ENCODE measurements at regions of chr10 and their contacts with region 1.

Region 1: DNA sequence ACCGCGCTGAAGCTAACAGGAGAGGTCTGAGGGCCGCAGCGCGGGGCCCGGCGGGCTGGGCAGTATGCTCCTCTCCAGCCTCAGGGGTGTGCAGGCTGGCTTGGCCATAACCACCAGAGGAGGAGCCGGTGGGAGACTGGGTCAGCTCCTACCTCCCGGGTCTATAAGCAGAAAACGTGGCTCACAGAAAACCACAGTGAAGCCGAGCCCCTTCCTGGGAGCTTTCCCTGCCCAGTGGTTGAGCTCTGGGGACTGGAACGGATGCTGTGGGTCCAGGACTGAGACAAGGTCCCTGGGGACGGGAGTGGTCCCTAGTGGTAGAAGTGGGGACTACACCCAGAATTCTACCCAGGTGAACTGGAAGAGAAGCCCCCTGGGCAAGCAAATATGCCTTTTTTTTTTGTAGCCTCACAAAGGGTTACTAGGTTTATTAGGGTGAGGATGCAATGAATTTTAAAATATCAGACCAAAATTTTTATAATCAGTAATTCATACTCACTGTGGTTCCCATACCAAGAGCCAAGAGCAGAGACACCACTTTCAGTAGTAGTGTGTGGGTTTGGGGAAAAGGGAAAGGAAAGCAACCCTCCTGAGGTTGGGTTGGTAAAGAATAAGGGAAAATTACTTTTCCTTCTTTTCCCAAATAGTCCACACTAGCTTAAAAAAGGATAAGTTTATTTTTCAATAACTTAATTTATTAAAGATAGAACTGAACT is 67.9 kb upstream of the PRKCQ start:
- DNase-seq: peak; percentile 87
- ATAC-seq: peak; percentile 95
- H3K4me3 Mint-ChIP-seq: no peak overlapping the region
- H3K27ac Mint-ChIP-seq: no peak overlapping the region
- H3K4me1 Mint-ChIP-seq: peaks cover 30% of the 10 kb centered on the region
- H3K27me3 Mint-ChIP-seq: no peaks in the 10 kb centered on the region
- CTCF ChIP-seq: peak; percentile 83

Region 2: DNA sequence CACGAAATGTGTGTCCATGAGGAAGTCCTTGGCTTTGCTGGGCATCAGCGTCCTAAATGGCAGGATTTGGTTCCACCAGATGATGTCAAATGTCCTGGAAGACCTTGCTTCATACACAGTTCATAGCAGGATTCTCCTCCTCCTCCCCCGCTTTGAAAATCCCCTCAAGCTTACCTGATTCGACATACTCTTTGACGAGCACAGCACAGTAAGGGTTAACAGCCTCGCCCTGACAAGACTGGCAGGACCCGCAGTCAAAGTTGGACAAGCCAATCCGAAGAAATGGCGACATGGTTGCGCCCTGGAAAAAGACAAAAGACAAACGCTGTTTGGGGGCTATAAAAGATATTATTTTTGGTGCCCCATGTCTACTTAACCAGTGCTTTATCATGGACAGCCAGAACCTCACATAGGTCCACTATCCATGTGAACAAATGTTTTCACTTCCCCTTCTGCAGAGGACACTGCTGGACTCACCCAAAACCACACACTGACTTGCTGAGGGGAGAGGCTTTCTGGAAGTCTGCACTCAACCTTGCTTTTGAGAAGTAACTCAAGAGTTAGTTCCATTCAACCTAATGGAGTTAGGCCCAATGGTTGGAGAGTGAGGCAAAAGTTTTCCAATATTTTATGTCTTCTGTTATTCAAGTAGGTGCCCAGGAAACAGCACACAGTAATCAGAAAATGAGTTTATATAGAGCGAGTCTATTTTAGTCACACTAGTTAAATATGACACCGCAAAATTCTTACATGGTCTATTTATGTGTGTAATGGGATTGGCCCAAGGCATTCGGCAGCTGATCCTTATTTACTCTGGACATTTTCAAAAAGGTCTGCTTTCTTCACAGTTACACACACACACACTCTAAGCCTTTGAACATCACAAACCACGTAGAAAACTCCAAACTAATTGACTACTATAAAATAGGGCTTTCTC is 132.9 kb before region 1 on chr10:
- CTCF ChIA-PET with region 1: interaction called, 17 read pairs
- POLR2A ChIA-PET with region 1: no interaction called
- DNase-seq: no peak
- ATAC-seq: no peak
- H3K4me3 Mint-ChIP-seq: no peak overlapping the region
- H3K27ac Mint-ChIP-seq: no peak overlapping the region
- H3K4me1 Mint-ChIP-seq: peaks cover 15% of the 10 kb centered on the region
- H3K27me3 Mint-ChIP-seq: no peaks in the 10 kb centered on the region
- CTCF ChIP-seq: no peak

Region 3: GRCh38 chr10:6580279-6581029 is 67.5 kb before region 1 on chr10:
- CTCF ChIA-PET with region 1: interaction called, 37 read pairs
- POLR2A ChIA-PET with region 1: no interaction called
- DNase-seq: peak; percentile 81
- ATAC-seq: peak; percentile 74
- H3K4me3 Mint-ChIP-seq: peak overlapping the region; percentile 85
- H3K27ac Mint-ChIP-seq: peak overlapping the region; percentile 58
- H3K4me1 Mint-ChIP-seq: peaks cover 35% of the 10 kb centered on the region
- H3K27me3 Mint-ChIP-seq: peaks cover 5% of the 10 kb centered on the region
- CTCF ChIP-seq: peak; percentile 76

Region 4: GRCh38 chr10:6621536-6621935 is 26.4 kb before region 1 on chr10:
- CTCF ChIA-PET with region 1: interaction called, 23 read pairs
- POLR2A ChIA-PET with region 1: no interaction called
- DNase-seq: no peak
- ATAC-seq: no peak
- H3K4me3 Mint-ChIP-seq: no peak overlapping the region
- H3K27ac Mint-ChIP-seq: no peak overlapping the region
- H3K4me1 Mint-ChIP-seq: peaks cover 36% of the 10 kb centered on the region
- H3K27me3 Mint-ChIP-seq: peaks cover 2% of the 10 kb centered on the region
- CTCF ChIP-seq: no peak

Region 5: DNA sequence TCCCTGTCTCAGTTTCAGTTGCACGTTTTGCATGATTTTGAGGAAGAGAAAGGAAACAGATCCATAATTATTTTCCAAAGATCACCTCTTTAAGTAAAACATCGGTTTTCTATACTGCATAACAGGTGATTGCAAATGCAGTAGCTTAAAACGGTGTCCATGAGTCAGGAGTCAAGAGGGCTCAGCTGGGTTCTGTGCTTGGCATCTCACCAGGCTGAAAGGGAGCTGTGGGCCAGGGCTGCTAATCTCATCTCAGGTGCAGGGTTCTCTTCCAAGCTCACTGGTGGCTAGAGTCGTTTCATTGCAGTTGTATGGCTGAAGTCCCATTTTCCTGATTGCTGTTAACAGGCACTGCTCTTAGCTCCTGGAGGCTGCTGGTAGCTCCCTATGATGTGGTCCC is 10.9 kb before region 1 on chr10:
- CTCF ChIA-PET with region 1: interaction called, 15 read pairs
- POLR2A ChIA-PET with region 1: no interaction called
- DNase-seq: no peak
- ATAC-seq: no peak
- H3K4me3 Mint-ChIP-seq: no peak overlapping the region
- H3K27ac Mint-ChIP-seq: no peak overlapping the region
- H3K4me1 Mint-ChIP-seq: 0 out of 2 replicates have a peak, but pooled peaks cover 2% of the 10 kb centered on the region
- H3K27me3 Mint-ChIP-seq: peaks cover 6% of the 10 kb centered on the region; the same call in 1 of the 2 replicates
- CTCF ChIP-seq: no peak

Region 6: GRCh38 chr10:6659471-6659870 is 11.5 kb after region 1 on chr10:
- CTCF ChIA-PET with region 1: interaction called, 14 read pairs
- POLR2A ChIA-PET with region 1: no interaction called
- DNase-seq: no peak
- ATAC-seq: no peak
- H3K4me3 Mint-ChIP-seq: no peak overlapping the region
- H3K27ac Mint-ChIP-seq: no peak overlapping the region
- H3K4me1 Mint-ChIP-seq: peaks cover 7% of the 10 kb centered on the region; the same call in 1 of the 2 replicates
- H3K27me3 Mint-ChIP-seq: no peaks in the 10 kb centered on the region; the same call in 1 of the 2 replicates
- CTCF ChIP-seq: no peak

Region 7: GRCh38 chr10:6667679-6668270 is 19.8 kb after region 1 on chr10:
- CTCF ChIA-PET with region 1: interaction called, 16 read pairs
- POLR2A ChIA-PET with region 1: no interaction called
- DNase-seq: peak; percentile 41
- ATAC-seq: peak; percentile 74
- H3K4me3 Mint-ChIP-seq: no peak overlapping the region
- H3K27ac Mint-ChIP-seq: no peak overlapping the region
- H3K4me1 Mint-ChIP-seq: peaks cover 4% of the 10 kb centered on the region
- H3K27me3 Mint-ChIP-seq: no peaks in the 10 kb centered on the region
- CTCF ChIP-seq: 0 out of 2 replicates have a peak, but pooled peaks have one; percentile 23

Measured in WTC11 (cell line).